ENCODE measurements at regions of chr4 and their contacts with region 1.

Region 1: DNA sequence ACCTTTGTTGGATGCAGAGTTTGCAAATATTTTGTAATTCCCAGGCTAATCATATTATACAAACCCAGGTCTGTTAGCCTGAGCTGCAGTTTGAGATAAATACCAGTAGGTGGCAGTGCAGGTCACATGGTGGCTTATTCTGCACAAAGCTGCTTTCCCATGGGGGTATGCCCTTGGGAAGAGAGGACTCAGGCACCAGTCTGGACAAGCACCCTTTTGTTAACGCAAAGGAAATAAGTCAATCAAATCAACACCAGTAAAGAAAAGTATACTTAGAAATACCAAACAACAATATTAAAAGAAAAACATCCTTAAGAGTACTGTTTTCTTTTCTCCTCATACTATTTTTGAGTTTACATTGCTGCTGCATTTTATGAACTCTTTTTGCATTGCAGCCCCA is 389.0 kb upstream of the ZFP42 start:
- DNase-seq: no peak

Region 2: GRCh38 chr4:187547316-187547715 is 59.3 kb before region 1 on chr4:
- intact Hi-C with region 1: no loop called
- DNase-seq: no peak

Region 3: GRCh38 chr4:187887906-187888305 is 281.3 kb after region 1 on chr4:
- intact Hi-C with region 1: no loop called
- DNase-seq: no peak

Region 4: GRCh38 chr4:188015025-188015778 is 408.6 kb after region 1 on chr4:
- intact Hi-C with region 1: no loop called
- DNase-seq: no peak

Region 5: DNA sequence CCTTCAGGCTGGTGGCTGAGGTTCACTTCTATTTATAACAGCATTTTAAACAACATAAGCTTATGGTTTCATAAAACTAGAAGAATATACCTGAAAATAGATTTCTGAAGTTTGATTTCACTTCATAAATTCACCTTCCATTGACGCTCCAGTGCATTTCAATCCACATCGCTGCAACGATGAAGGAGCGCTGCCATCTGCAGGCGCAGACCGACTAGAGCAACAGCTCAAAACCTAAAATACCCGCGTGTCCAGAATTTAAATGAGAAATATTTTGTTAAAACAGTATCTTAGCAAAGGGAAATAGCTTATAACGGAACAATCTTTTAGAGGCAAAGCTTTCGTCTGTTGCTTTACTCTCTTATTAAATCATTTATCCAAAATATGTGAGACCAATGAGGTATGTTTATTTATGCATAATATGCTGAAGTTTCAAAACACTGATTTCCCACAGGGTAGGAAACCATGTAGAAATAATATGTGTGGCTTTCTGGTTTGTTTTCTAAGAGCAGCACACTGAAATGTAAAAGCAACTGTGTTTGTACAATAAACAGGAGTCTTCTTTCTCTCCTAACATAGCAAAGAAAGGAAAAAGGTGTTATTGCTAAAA is 1517.7 kb after region 1 on chr4:
- intact Hi-C with region 1: loop called (anchors 5 kb)
- DNase-seq: no peak

Region 6: GRCh38 chr4:189202182-189202868 is 1595.7 kb after region 1 on chr4:
- intact Hi-C with region 1: loop called (anchors 10 kb)
- DNase-seq: no peak

Measured in cardiac septum (tissue), 1 donor.